Prostate gland (tissue), 2 donors: ENCODE measurements at regions of chr10 and their contacts with region 1.

Region 1: DNA sequence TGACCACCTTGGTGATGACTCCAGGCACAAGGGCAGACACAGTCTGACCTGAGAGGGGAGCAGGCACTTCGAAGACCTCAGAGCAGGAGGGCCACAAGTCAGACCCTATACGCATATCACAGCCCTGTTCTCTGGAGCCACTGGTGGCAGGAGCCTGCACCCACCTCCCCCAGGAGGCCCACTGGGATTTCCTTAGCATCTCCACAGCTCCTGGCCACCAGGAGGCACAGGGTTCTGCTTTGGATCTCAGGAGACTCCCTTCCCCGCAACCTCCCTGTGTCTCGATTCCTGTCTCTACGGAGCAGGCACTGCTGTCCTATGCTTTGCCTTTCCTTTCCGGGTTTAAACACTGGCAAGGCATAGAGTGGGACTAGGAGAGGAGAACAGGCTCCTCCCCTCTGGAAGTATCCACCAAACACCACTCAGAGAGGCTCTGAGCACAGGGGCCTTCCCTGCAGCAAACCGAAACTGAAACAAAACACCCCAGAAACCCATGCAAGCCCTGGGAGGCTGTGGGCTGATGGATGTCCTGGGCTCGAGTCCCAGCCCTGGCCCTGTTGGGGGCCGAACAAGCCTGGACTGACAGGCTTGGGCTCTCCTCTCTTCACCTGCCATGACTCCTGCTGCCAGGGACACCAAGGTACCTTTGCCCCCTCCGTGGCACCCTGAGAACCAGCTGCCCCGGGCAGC is 166.3 kb downstream of the NEURL1 start:
- DNase-seq: peak; percentile 77
- H3K4me3 ChIP-seq: peak overlapping the region; percentile 27 to 46
- H3K27ac ChIP-seq: peak overlapping the region; percentile 88 to 89
- H3K4me1 ChIP-seq: no peaks in the 10 kb centered on the region
- H3K27me3 ChIP-seq: no peaks in the 10 kb centered on the region
- CTCF ChIP-seq: no peak
- POLR2A ChIP-seq: peak; percentile 55

Region 2: GRCh38 chr10:103504181-103504783 is 155.5 kb before region 1 on chr10:
- intact Hi-C with region 1: no loop called
- DNase-seq: no peak
- H3K4me3 ChIP-seq: no peak overlapping the region
- H3K27ac ChIP-seq: no peak overlapping the region
- H3K4me1 ChIP-seq: no peaks in the 10 kb centered on the region
- H3K27me3 ChIP-seq: no peaks in the 10 kb centered on the region
- CTCF ChIP-seq: no peak
- POLR2A ChIP-seq: no peak

Region 3: GRCh38 chr10:103616705-103617601 is 42.9 kb before region 1 on chr10:
- intact Hi-C with region 1: loop called (anchors 2 kb)
- DNase-seq: no peak
- H3K4me3 ChIP-seq: no peak overlapping the region
- H3K27ac ChIP-seq: no peak overlapping the region
- H3K4me1 ChIP-seq: no peaks in the 10 kb centered on the region
- H3K27me3 ChIP-seq: no peaks in the 10 kb centered on the region
- CTCF ChIP-seq: no peak
- POLR2A ChIP-seq: no peak

Region 4: GRCh38 chr10:103637927-103638557 is 21.8 kb before region 1 on chr10:
- intact Hi-C with region 1: loop called (anchors 2 kb)
- DNase-seq: peak; percentile 57
- H3K4me3 ChIP-seq: no peak overlapping the region
- H3K27ac ChIP-seq: peak overlapping the region; percentile 57 to 65
- H3K4me1 ChIP-seq: peaks cover 5% of the 10 kb centered on the region
- H3K27me3 ChIP-seq: no peaks in the 10 kb centered on the region
- CTCF ChIP-seq: no peak
- POLR2A ChIP-seq: no peak